ENCODE measurements at regions of chr6 and their contacts with region 1.

Region 1: GRCh38 chr6:47413752-47414422 is 63.7 kb upstream of the CD2AP start:
- DNase-seq: peak; percentile 65
- ATAC-seq: peak; percentile 81
- H3K4me3 Mint-ChIP-seq: peak overlapping the region; percentile 81
- H3K27ac Mint-ChIP-seq: peak overlapping the region; percentile 86
- H3K4me1 Mint-ChIP-seq: peaks cover 24% of the 10 kb centered on the region
- H3K27me3 Mint-ChIP-seq: peaks cover 4% of the 10 kb centered on the region

Region 2: DNA sequence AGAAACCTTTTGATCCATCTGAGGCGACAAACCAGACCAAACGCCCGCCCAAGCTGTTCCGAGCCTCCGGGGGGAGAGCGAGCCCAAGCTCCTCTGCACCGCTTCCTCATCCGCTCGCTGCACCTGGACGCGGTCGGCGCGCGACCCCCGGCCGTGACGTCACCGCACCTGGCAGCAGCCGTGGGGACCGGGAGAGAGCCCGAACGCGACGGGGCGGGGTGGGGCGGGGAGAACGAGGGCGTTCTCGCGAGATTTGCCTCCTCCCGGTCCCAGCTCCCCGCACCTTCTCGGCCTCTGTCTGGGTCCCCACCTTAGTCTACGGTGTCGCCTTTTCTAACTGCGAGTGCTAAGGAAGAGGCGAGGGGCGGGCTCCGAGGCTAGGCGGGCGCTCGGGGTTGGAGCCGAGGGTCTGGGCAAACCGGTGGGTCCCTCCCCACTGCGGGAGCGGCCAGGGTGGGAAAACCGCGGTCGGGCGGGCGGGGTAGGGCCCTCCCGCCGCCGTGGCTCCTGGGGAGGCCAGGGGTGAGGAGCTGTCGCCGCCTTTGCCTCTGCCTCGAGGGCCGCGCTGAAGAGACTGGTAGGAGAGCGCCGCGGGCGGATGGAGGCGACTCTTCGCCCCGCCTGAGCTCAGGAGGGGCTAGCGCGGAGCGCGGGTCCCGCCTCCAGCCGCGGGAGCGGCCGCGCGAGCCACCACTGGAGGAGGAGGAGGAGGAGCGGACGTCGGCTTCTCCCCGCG is 63.8 kb after region 1 on chr6 and contains the start of gene CD2AP:
- CTCF ChIA-PET with region 1: interaction called, 50 read pairs
- POLR2A ChIA-PET with region 1: interaction called, 74 read pairs
- DNase-seq: peak; percentile 94
- ATAC-seq: peak; percentile 84
- H3K4me3 Mint-ChIP-seq: peak within 1 kb of the TSS; percentile 95
- H3K27ac Mint-ChIP-seq: peak within 1 kb of the TSS; percentile 95
- H3K4me1 Mint-ChIP-seq: peaks cover 35% of the 10 kb centered on the region
- H3K27me3 Mint-ChIP-seq: no peaks in the 10 kb centered on the region
- total RNA-seq, gene CD2AP: 38.8 to 39.2 TPM

Region 3: GRCh38 chr6:47733879-47734558 is 320.1 kb after region 1 on chr6:
- CTCF ChIA-PET with region 1: interaction called, 21 read pairs
- POLR2A ChIA-PET with region 1: no interaction called
- DNase-seq: no peak
- ATAC-seq: no peak
- H3K4me3 Mint-ChIP-seq: no peak overlapping the region
- H3K27ac Mint-ChIP-seq: no peak overlapping the region
- H3K4me1 Mint-ChIP-seq: peaks cover 3% of the 10 kb centered on the region
- H3K27me3 Mint-ChIP-seq: no peaks in the 10 kb centered on the region

Region 4: DNA sequence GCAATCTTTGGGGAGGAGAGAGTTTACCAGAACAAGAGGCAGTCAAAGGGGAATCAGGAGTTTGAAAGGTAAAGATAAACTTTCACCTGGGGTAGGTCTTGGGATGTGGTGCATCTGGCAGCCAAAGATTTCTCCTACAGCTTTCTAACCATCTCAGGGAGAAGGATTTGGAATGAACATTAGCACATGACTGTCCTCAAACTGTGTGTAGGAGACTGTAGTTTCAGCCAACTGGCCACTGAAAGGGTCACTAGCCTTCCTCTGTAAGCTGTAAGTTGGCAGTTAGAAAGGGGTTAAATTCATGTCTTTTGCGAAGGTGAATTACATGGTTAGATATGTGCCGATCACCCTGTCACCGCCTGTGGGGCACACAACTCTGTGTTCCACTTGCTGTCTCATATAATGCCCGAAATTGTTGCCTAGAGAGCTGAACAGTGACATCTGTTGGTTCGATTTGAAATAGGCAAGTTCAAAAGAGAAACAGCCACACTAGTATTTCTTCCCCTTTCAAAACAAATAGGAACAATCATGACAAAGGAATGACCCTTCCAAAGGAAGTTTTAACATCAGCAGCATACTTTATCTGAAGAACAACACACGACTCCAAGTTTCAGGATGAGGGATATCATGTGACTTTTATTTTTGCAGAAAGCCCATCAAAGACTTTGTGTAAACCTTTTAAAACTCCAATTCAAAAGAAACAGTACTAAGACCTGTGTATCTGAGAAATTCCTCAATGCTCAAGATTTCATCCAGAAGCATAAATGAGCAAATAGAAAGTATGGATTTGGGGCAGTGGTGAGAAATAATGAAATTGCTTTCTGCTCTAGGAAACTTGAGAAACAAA is 366.8 kb after region 1 on chr6:
- CTCF ChIA-PET with region 1: interaction called, 22 read pairs
- POLR2A ChIA-PET with region 1: no interaction called
- DNase-seq: peak; percentile 55
- ATAC-seq: peak; percentile 98
- H3K4me3 Mint-ChIP-seq: no peak overlapping the region
- H3K27ac Mint-ChIP-seq: no peak overlapping the region
- H3K4me1 Mint-ChIP-seq: peaks cover 7% of the 10 kb centered on the region
- H3K27me3 Mint-ChIP-seq: peaks cover 22% of the 10 kb centered on the region

Region 5: DNA sequence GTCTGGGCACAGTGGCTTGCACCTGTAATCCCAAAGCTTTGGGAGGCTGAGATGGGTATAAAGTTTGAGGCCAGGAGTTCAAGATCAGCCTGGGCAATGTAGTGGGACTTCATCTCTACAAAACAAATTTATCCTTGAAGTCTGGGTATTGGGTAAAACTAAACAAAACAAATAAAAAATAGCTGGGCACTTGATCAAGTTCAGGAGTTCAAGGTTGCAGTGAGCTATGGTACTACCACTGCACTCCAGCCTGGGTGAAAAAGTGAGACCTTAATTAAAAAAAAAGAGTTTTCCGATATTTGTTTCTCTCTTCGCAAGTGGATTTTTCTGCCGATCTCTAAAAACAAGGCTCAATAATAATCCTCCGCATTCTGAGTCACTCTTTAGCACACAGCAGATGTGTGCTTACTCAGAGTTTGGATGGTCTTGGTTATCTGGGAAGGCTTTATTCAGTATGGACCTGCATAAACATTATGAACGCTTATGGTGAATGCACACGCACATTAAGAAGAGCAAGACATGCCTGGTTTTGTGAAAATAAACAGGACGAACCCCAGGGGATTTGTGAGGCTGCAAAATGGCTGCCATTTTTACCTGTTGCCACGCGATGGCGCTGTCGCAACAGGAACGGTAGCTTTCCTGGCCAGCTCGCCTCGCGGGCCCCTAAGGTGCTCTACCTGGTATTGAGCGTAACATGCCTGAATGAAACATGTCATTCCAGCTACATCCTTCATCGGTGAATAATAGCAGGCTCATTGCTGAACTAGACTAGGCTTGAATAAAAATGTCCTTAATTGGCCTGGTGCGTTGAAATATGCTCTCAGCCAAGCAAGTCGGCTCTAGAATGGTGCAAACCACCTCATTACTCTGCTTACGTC is 374.0 kb after region 1 on chr6:
- CTCF ChIA-PET with region 1: interaction called, 22 read pairs
- POLR2A ChIA-PET with region 1: no interaction called
- DNase-seq: peak; percentile 66
- ATAC-seq: peak; percentile 85
- H3K4me3 Mint-ChIP-seq: no peak overlapping the region
- H3K27ac Mint-ChIP-seq: no peak overlapping the region
- H3K4me1 Mint-ChIP-seq: peaks cover 3% of the 10 kb centered on the region
- H3K27me3 Mint-ChIP-seq: peaks cover 40% of the 10 kb centered on the region

Measured in activated CD8-positive, alpha-beta T cell treated with anti-CD3 and anti-CD28 coated beads, Interleukin-2, amount 10 ng/mL, durations not matched to agents 7 days and 5 days (primary cell).